WTC11 (cell line): ENCODE measurements at regions of chr17 and their contacts with region 1.

Region 1: GRCh38 chr17:63611354-63611753 is 10.7 kb downstream of the TACO1 start:
- DNase-seq: no peak
- ATAC-seq: peak; percentile 46
- H3K4me3 Mint-ChIP-seq: no peak overlapping the region
- H3K27ac Mint-ChIP-seq: no peak overlapping the region
- H3K4me1 Mint-ChIP-seq: no peaks in the 10 kb centered on the region
- H3K27me3 Mint-ChIP-seq: no peaks in the 10 kb centered on the region
- CTCF ChIP-seq: no peak

Region 2: GRCh38 chr17:63349478-63350000 is 261.8 kb before region 1 on chr17:
- CTCF ChIA-PET with region 1: no interaction called
- POLR2A ChIA-PET with region 1: no interaction called
- DNase-seq: no peak
- ATAC-seq: no peak
- H3K4me3 Mint-ChIP-seq: no peak overlapping the region
- H3K27ac Mint-ChIP-seq: no peak overlapping the region
- H3K4me1 Mint-ChIP-seq: peaks cover 5% of the 10 kb centered on the region; the same call in 1 of the 2 replicates
- H3K27me3 Mint-ChIP-seq: no peaks in the 10 kb centered on the region
- CTCF ChIP-seq: no peak

Region 3: GRCh38 chr17:63445979-63446691 is 165.2 kb before region 1 on chr17 and contains the start of gene CYB561:
- CTCF ChIA-PET with region 1: interaction called, 14 read pairs
- POLR2A ChIA-PET with region 1: no interaction called
- DNase-seq: peak; percentile 76
- ATAC-seq: peak; percentile 80
- H3K4me3 Mint-ChIP-seq: peak within 1 kb of the TSS; percentile 64
- H3K27ac Mint-ChIP-seq: peak within 1 kb of the TSS; percentile 74; the same call in 1 of the 2 replicates
- H3K4me1 Mint-ChIP-seq: peaks cover 32% of the 10 kb centered on the region
- H3K27me3 Mint-ChIP-seq: peaks cover 5% of the 10 kb centered on the region
- CTCF ChIP-seq: peak; percentile 62
- total RNA-seq, gene CYB561: 27.0 to 35.1 TPM (median 28.7 TPM) in 3 replicates

Region 4: DNA sequence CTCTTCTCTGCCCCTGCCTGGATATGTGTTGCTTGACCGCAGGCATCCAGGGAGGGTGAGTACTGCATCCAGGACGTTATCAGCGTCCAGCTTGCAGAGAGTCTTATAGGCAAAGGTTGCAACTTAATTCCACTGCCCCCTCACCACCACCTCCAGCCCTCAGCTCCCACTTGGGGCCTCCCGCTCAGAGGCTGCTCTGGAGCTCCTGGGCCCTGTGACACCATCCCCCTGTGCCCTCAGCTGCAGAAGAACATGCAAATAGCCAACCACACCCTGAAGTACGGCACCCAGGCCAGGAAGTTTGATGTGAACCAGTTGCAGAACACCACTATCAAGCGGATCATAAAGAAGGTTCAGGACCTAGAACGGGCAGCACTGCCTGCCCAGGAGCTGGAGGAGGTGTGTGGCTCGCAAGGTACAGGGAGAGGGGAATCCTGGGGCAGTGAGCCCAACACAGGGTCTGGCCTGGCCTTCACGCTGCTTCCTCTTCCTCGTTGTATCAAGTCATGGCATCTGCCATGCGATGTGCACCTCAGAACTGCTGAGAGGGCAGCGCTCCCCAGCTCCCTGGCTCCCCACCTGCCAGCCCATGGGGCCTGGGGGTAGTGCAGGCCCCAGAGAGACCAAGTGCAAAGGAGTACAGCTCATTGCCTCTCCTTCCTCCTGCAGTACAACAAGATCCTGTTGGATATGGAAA is 124.9 kb before region 1 on chr17:
- CTCF ChIA-PET with region 1: no interaction called
- POLR2A ChIA-PET with region 1: no interaction called
- DNase-seq: no peak
- ATAC-seq: no peak
- H3K4me3 Mint-ChIP-seq: no peak overlapping the region
- H3K27ac Mint-ChIP-seq: no peak overlapping the region
- H3K4me1 Mint-ChIP-seq: no peaks in the 10 kb centered on the region
- H3K27me3 Mint-ChIP-seq: no peaks in the 10 kb centered on the region
- CTCF ChIP-seq: no peak

Region 5: GRCh38 chr17:63523253-63523855 is 88.0 kb before region 1 on chr17 and contains the start of gene KCNH6:
- CTCF ChIA-PET with region 1: interaction called, 14 read pairs
- POLR2A ChIA-PET with region 1: no interaction called
- DNase-seq: no peak
- ATAC-seq: peak; percentile 11
- H3K4me3 Mint-ChIP-seq: peak within 1 kb of the TSS; percentile 67
- H3K27ac Mint-ChIP-seq: no peak within 1 kb of the TSS; the same call in 1 of the 2 replicates
- H3K4me1 Mint-ChIP-seq: peaks cover 34% of the 10 kb centered on the region
- H3K27me3 Mint-ChIP-seq: peaks cover 4% of the 10 kb centered on the region
- CTCF ChIP-seq: no peak
- total RNA-seq, gene KCNH6: 2.1 to 2.4 TPM (median 2.3 TPM) in 3 replicates

Region 6: GRCh38 chr17:63600569-63601438 is 10.6 kb before region 1 on chr17 and contains the start of gene TACO1:
- CTCF ChIA-PET with region 1: interaction called, 30 read pairs
- POLR2A ChIA-PET with region 1: interaction called, 3 read pairs
- DNase-seq: peak; percentile 83
- ATAC-seq: peak; percentile 96
- H3K4me3 Mint-ChIP-seq: peak within 1 kb of the TSS; percentile 84
- H3K27ac Mint-ChIP-seq: peak within 1 kb of the TSS; percentile 89
- H3K4me1 Mint-ChIP-seq: peaks cover 9% of the 10 kb centered on the region
- H3K27me3 Mint-ChIP-seq: no peaks in the 10 kb centered on the region
- CTCF ChIP-seq: no peak
- total RNA-seq, gene TACO1: 22.8 to 26.9 TPM (median 24.1 TPM) in 3 replicates

Region 7: DNA sequence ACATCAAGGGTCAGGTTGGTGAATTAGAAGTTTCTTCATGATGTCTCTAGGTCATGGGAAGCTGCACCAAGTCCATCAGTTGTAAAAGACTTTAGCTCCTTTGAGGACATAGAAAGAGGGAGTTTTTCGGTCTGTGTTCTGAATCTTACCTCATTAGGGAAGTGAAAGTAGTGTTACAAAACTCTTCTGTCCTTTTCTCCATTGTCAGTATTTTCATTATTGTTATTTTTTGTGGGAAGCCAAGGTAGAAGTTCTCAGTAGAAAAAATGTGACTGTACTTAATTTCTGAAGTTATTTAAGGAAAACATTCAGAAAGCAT is 35.1 kb after region 1 on chr17:
- CTCF ChIA-PET with region 1: no interaction called
- POLR2A ChIA-PET with region 1: no interaction called
- DNase-seq: no peak
- ATAC-seq: no peak
- H3K4me3 Mint-ChIP-seq: no peak overlapping the region
- H3K27ac Mint-ChIP-seq: no peak overlapping the region
- H3K4me1 Mint-ChIP-seq: peaks cover 19% of the 10 kb centered on the region
- H3K27me3 Mint-ChIP-seq: no peaks in the 10 kb centered on the region
- CTCF ChIP-seq: no peak

Region 8: DNA sequence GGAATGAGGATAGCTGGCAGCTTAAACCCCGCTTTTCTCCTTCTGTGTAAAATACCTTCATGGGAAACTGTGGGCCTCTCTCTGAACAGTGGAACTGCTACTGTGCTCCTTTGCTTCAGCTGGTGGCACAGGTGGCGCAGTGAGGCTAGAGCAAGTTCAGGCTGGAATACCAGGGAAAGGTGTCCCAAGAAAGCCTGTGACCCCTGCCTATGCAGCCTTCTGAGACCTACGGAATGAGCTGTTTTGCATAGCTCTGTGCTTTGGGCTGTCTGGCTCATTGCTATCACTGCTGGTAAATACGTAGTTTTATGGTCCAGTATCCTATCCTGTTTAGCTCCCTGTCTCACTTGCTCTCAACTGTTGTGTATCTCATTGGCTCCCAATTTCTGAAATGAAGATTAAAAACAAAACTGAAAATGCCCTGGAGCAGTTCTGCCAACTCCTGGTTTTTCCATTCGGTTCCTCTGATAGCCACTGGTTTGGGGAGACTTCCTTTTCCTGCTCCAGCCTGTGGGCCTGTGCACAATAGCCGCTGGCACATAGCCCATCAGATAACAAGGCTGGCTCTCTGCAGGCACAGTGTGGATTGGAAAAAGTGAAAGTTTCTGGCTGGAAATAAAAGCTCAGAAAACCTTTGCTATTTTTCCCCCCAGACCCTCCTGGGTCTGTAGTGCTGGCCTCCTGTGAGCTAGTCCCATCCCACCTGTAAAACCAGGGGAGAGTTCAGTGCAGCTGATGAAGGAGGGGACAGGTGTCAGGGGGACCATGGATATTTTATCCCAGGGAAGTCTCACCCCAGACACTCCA is 64.5 kb after region 1 on chr17:
- CTCF ChIA-PET with region 1: interaction called, 27 read pairs
- POLR2A ChIA-PET with region 1: interaction called, 5 read pairs
- DNase-seq: no peak
- ATAC-seq: peak; percentile 38
- H3K4me3 Mint-ChIP-seq: no peak overlapping the region
- H3K27ac Mint-ChIP-seq: peak overlapping the region; percentile 73
- H3K4me1 Mint-ChIP-seq: peaks cover 43% of the 10 kb centered on the region
- H3K27me3 Mint-ChIP-seq: no peaks in the 10 kb centered on the region
- CTCF ChIP-seq: no peak

Region 9: GRCh38 chr17:63780522-63780921 is 169.2 kb after region 1 on chr17:
- CTCF ChIA-PET with region 1: no interaction called
- POLR2A ChIA-PET with region 1: no interaction called
- DNase-seq: no peak
- ATAC-seq: no peak
- H3K4me3 Mint-ChIP-seq: no peak overlapping the region
- H3K27ac Mint-ChIP-seq: peak overlapping the region; percentile 90; the same call in 1 of the 2 replicates
- H3K4me1 Mint-ChIP-seq: peaks cover 13% of the 10 kb centered on the region
- H3K27me3 Mint-ChIP-seq: no peaks in the 10 kb centered on the region
- CTCF ChIP-seq: no peak